WTC11 (cell line): ENCODE measurements at regions of chr13 and their contacts with region 1.

Region 1: DNA sequence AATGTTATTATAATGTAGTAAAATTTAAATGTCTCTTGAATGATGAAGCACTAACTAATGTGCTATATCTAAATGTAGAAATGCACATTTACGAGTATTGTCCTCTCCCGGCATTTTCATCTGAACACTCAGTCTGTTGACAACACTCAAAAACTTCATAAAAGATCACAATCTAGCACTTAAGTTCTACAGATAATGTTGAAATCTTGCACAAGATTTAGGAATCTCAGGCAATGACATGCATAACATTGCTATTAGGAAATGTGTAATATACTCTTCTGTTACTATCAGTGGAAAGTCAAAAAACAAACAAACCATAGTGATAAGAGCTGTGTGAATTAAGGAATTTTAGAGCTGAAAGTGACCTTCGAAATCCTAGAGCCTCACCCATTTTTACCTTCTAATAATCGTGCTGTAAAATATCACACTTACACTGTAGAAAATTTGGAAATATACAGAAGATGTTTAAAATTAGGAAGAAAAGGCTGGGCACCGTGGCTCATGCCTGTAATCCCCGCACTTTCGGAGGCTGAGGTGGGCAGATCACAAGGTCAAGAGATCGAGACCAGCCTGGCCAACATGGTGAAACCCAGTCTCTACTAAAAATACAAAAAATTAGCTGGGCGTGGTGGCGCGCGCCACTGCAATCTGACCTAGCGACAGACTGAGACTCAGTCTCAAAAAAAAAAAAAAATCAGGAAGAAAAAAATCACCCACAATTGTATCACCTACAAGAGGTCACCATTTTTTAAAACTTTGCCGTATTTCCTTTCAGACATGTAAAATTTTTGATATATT is 37.7 kb upstream of the XPO4 start:
- DNase-seq: no peak
- ATAC-seq: no peak
- H3K4me3 Mint-ChIP-seq: no peak overlapping the region
- H3K27ac Mint-ChIP-seq: peak overlapping the region; percentile 37; the same call in 1 of the 2 replicates
- H3K4me1 Mint-ChIP-seq: peaks cover 20% of the 10 kb centered on the region
- H3K27me3 Mint-ChIP-seq: peaks cover 13% of the 10 kb centered on the region
- CTCF ChIP-seq: no peak

Region 2: GRCh38 chr13:20924758-20925394 is 15.4 kb before region 1 on chr13:
- CTCF ChIA-PET with region 1: interaction called, 18 read pairs
- POLR2A ChIA-PET with region 1: no interaction called
- DNase-seq: peak; percentile 87
- ATAC-seq: peak; percentile 78
- H3K4me3 Mint-ChIP-seq: no peak overlapping the region
- H3K27ac Mint-ChIP-seq: no peak overlapping the region
- H3K4me1 Mint-ChIP-seq: peaks cover 6% of the 10 kb centered on the region; the same call in 1 of the 2 replicates
- H3K27me3 Mint-ChIP-seq: no peaks in the 10 kb centered on the region
- CTCF ChIP-seq: peak; percentile 49

Region 3: GRCh38 chr13:20953245-20953931 is 13.1 kb after region 1 on chr13:
- CTCF ChIA-PET with region 1: interaction called, 17 read pairs
- POLR2A ChIA-PET with region 1: no interaction called
- DNase-seq: no peak
- ATAC-seq: no peak
- H3K4me3 Mint-ChIP-seq: no peak overlapping the region
- H3K27ac Mint-ChIP-seq: no peak overlapping the region
- H3K4me1 Mint-ChIP-seq: peaks cover 16% of the 10 kb centered on the region
- H3K27me3 Mint-ChIP-seq: peaks cover 6% of the 10 kb centered on the region
- CTCF ChIP-seq: no peak